ENCODE measurements at regions of chr1 and their contacts with region 1.

Region 1: DNA sequence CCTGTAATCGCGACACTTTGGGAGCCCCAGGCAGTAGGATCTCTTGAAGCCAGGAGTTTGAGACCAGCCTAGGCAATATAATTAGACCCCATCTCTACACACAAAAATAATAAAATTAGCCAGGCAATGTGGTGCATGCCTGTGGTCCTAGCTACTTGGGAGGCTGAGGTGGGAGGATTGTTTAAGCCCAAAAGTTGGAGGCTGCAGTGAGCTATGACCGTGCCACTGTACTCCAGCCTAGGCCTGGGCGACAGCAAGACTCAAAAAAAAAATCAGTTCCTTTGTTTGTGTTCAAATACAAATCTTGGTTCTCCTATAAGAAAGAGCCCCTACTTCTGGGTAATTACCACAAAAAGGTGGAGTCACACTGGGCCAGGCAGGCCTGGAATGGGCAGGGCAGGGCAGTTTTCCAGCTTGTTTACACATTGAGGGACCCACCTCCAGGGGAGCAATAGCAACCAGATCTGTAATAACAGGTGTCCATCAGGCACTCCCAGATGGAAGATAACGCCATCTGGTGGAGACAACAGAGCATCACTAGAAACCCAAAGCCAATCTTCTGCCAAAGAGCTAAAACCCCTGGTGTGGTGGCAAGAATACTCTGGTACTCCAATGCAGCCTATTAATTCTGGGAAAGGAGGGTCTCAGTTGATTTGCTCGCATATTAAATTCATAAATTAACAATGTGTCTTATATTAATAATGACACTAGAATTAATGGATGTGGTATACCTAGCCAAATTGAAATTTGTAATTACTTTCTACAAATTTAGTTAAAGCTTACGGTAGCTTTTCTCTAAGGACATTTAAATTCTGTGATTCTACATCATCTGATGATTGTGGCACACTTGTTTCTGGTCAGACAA is 13.2 kb downstream of the PPP1R15B start:
- DNase-seq: peak; percentile 100
- ATAC-seq: peak; percentile 100
- H3K4me3 ChIP-seq: no peak overlapping the region
- H3K27ac ChIP-seq: no peak overlapping the region
- H3K4me1 ChIP-seq: peaks cover 4% of the 10 kb centered on the region; the same call in 1 of the 2 replicates
- H3K27me3 ChIP-seq: no peaks in the 10 kb centered on the region
- CTCF ChIP-seq: peak; percentile 99

Region 2: GRCh38 chr1:204171751-204172178 is 226.7 kb before region 1 on chr1:
- CTCF ChIA-PET with region 1: no interaction called
- POLR2A ChIA-PET with region 1: no interaction called
- intact Hi-C with region 1: no loop called
- DNase-seq: peak; percentile 100
- ATAC-seq: peak; percentile 91
- H3K4me3 ChIP-seq: 0 out of 2 replicates have a peak overlapping the region, but pooled peaks have one; percentile 8
- H3K27ac ChIP-seq: peak overlapping the region; percentile 96
- H3K4me1 ChIP-seq: peaks cover 59% of the 10 kb centered on the region
- H3K27me3 ChIP-seq: no peaks in the 10 kb centered on the region
- CTCF ChIP-seq: no peak

Region 3: GRCh38 chr1:204377795-204378608 is 20.4 kb before region 1 on chr1:
- CTCF ChIA-PET with region 1: interaction called, 66 read pairs
- POLR2A ChIA-PET with region 1: interaction called, 14 read pairs
- intact Hi-C with region 1: loop called (anchors 1 kb)
- DNase-seq: peak; percentile 90
- ATAC-seq: peak; percentile 63
- H3K4me3 ChIP-seq: peak overlapping the region; percentile 72
- H3K27ac ChIP-seq: peak overlapping the region; percentile 70
- H3K4me1 ChIP-seq: peaks cover 43% of the 10 kb centered on the region
- H3K27me3 ChIP-seq: no peaks in the 10 kb centered on the region
- CTCF ChIP-seq: 0 out of 2 replicates have a peak, but pooled peaks have one; percentile 7

Region 4: GRCh38 chr1:204446370-204447111 is 48.1 kb after region 1 on chr1:
- CTCF ChIA-PET with region 1: interaction called, 4 read pairs
- POLR2A ChIA-PET with region 1: interaction called, 23 read pairs
- intact Hi-C with region 1: no loop called
- DNase-seq: peak; percentile 76
- ATAC-seq: peak; percentile 6; the same call in 1 of the 2 replicates
- H3K4me3 ChIP-seq: no peak overlapping the region
- H3K27ac ChIP-seq: no peak overlapping the region
- H3K4me1 ChIP-seq: peaks cover 64% of the 10 kb centered on the region
- H3K27me3 ChIP-seq: no peaks in the 10 kb centered on the region
- CTCF ChIP-seq: peak; percentile 68